ENCODE measurements at regions of chr7 and their contacts with region 1.

Region 1: GRCh38 chr7:116173051-116174028 is 37.0 kb upstream of the TES start:
- DNase-seq: peak; percentile 37
- H3K4me3 Mint-ChIP-seq: no peak overlapping the region
- H3K27ac Mint-ChIP-seq: no peak overlapping the region
- H3K4me1 Mint-ChIP-seq: no peaks in the 10 kb centered on the region
- H3K27me3 Mint-ChIP-seq: peaks cover 7% of the 10 kb centered on the region

Region 2: DNA sequence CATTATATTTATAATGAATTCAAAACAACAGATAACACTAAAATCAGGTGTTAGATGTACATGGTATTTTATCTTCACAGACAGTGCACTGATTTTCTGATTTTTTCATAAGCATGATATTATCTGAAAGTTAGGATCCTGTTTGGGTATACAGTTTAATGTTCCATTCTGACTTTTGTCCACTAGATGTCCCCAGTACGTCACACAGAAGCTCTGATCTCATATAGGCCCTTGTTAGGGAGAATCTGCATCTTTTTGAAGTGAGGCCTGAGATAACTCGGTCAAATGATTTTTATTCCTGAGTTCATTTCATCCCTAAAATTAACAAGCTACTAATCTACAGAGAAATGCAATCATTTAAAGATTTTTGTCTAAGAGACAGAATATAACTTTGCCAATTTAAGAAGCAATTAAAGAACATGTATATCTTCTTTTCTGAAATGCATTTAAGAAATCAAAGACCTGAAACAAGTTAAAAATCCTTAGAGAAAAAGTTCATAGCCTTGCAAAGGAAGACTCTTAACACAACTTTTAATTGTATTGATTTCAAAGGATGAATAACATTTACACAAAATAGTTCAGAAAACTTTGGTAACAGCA is 35.0 kb before region 1 on chr7:
- CTCF ChIA-PET with region 1: interaction called, 3 read pairs
- intact Hi-C with region 1: loop called (anchors 1 kb)
- DNase-seq: peak; percentile 34
- H3K4me3 Mint-ChIP-seq: no peak overlapping the region
- H3K27ac Mint-ChIP-seq: no peak overlapping the region
- H3K4me1 Mint-ChIP-seq: peaks cover 9% of the 10 kb centered on the region
- H3K27me3 Mint-ChIP-seq: peaks cover 2% of the 10 kb centered on the region

Region 3: GRCh38 chr7:116195451-116195850 is 22.1 kb after region 1 on chr7:
- CTCF ChIA-PET with region 1: no interaction called
- intact Hi-C with region 1: no loop called
- DNase-seq: no peak
- H3K4me3 Mint-ChIP-seq: no peak overlapping the region
- H3K27ac Mint-ChIP-seq: no peak overlapping the region
- H3K4me1 Mint-ChIP-seq: no peaks in the 10 kb centered on the region
- H3K27me3 Mint-ChIP-seq: no peaks in the 10 kb centered on the region

Region 4: DNA sequence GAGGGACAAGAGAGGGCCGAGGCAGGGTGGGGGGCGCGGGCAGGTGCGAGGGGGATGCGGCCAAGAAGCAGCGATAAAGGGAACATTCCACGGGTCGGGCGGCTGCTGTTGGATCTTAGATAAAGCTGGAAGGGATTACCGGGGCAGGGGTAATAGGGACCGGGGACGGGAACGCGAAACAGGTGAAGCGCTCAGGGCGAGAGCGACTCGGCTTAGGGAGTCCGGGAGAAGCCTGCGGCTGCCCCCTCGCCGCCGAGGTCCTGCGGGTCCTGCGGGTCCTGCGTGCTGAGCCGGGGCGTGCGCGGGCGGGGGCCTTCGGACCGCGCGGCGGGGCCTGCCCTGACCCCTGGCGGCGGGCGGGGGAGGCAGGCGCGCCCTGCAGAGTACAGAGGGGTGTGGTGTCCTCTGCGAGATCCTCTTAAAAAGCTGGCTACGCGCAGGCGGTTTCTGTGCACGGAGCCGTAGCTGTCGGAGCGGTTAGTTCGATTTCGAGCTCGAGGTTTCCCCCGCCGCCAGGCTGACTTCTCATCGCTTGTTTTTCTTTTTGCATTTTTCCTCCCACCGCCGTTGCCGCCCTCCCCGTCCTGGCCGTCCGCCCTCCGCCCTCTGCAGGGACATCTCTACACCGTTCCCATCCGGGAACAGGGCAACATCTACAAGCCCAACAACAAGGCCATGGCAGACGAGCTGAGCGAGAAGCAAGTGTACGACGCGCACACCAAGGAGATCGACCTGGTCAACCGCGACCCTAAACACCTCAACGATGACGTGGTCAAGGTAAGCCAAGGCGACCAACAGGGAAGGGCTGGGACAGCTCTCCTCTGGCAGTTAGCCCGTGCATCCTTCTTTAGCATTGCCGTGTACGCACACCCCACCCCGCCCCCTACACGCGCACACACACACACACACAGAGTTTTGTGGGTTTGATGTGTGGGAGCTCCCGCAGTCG is 352.8 kb after region 1 on chr7:
- CTCF ChIA-PET with region 1: interaction called, 3 read pairs
- intact Hi-C with region 1: loop called (anchors 2 kb)
- DNase-seq: peak; percentile 65
- H3K4me3 Mint-ChIP-seq: peak overlapping the region; percentile 85
- H3K27ac Mint-ChIP-seq: no peak overlapping the region
- H3K4me1 Mint-ChIP-seq: peaks cover 19% of the 10 kb centered on the region
- H3K27me3 Mint-ChIP-seq: peaks cover 62% of the 10 kb centered on the region

Region 5: DNA sequence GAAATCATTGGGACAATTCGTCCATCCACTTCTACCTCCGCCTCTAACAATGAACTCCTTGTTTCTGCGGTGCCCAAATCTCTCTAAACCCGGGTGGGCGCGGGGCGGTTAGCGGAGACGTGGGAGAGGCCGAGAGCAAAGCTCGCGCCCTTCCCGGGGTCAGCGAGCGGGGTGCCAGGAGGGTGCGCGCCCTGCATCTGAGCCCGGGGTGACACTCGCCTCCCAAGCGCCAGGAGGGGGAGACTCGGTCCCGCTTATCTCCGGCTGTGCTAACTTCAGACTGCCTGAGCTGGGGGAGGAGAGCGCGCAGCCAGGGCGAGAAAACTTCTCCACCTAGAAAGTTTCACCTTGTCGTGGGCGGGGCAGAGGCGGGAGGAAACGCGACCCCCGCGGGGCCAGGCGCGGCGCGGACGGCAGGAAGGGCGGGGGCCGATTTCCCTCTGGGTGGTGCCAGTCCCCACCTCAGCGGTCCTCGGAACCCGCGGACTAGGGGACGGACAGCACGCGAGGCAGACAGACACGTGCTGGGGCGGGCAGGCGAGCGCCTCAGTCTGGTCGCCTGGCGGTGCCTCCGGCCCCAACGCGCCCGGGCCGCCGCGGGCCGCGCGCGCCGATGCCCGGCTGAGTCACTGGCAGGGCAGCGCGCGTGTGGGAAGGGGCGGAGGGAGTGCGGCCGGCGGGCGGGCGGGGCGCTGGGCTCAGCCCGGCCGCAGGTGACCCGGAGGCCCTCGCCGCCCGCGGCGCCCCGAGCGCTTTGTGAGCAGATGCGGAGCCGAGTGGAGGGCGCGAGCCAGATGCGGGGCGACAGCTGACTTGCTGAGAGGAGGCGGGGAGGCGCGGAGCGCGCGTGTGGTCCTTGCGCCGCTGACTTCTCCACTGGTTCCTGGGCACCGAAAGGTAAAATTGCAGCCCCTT is 498.6 kb after region 1 on chr7 and contains the start of gene MET:
- CTCF ChIA-PET with region 1: no interaction called
- intact Hi-C with region 1: loop called (anchors 10 kb)
- DNase-seq: peak; percentile 72
- H3K4me3 Mint-ChIP-seq: peak within 1 kb of the TSS; percentile 73
- H3K27ac Mint-ChIP-seq: no peak within 1 kb of the TSS
- H3K4me1 Mint-ChIP-seq: peaks cover 2% of the 10 kb centered on the region
- H3K27me3 Mint-ChIP-seq: peaks cover 54% of the 10 kb centered on the region
- total RNA-seq, gene MET: 0.42 to 0.52 TPM

Region 6: DNA sequence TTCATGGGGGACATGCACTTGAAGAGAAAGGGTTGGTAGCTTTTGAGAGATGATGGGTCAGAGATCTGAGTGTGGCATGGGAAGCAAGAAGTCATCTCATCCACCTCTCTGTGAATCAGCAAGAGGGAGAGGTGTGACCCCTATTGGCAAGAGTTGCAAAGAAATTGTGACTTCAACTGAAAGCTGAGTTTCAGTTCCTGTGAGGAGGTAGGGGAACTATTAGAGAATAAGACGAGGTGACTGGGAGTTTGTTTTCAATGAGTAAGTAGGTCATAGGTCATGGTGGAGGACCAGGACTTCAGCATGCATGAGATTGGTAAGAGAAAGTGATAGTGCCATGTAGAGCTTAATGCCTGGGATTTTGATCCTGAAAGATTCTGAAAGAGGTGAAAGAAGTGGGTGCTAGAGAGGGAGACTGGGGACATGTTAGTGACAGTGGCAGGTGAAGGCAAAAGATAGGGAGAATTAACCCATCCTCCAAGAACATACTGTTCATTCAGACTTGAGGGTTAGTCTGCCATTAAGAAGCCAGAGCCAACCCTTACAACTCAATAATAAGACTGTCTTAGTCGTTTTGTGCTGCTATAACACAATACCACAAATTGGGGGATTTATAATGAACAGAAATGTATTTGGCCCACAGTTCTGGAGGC is 613.6 kb after region 1 on chr7:
- CTCF ChIA-PET with region 1: no interaction called
- intact Hi-C with region 1: loop called (anchors 2 kb)
- DNase-seq: peak; percentile 63
- H3K4me3 Mint-ChIP-seq: no peak overlapping the region
- H3K27ac Mint-ChIP-seq: no peak overlapping the region
- H3K4me1 Mint-ChIP-seq: no peaks in the 10 kb centered on the region
- H3K27me3 Mint-ChIP-seq: peaks cover 3% of the 10 kb centered on the region

Region 7: DNA sequence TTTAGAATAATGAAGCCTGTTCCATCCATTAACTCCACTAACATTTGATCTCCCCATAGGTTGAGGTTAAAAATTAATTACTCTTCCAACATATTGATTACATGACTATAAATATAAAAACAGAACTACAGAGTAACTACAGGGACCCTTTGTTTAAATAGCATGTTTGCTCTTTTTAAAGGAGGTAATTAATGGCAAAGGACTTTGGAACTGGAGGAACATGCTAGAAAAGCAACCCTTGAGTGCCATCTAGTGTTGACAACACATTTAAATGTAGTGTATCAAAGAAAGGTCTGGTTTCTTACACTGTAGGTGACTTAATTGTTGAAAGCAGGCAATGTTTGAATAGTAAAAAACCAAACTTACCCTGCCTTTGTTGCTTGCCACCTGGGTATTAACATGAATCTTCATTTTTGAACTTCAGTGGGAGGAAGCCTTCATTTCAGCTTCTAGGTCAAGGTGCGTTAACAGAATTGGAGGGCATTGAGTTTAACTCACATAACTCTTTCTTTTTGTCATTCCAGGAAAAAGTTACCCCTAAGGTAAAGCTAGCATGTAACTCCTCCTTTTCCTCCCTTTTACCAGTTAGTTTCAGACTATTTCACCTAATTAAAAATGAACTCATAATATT is 636.4 kb after region 1 on chr7:
- CTCF ChIA-PET with region 1: no interaction called
- intact Hi-C with region 1: loop called (anchors 1 kb)
- DNase-seq: peak; percentile 21
- H3K4me3 Mint-ChIP-seq: no peak overlapping the region
- H3K27ac Mint-ChIP-seq: no peak overlapping the region
- H3K4me1 Mint-ChIP-seq: no peaks in the 10 kb centered on the region
- H3K27me3 Mint-ChIP-seq: no peaks in the 10 kb centered on the region